Heart right ventricle (tissue), 16 donors: ENCODE measurements at regions of chrX and their contacts with region 1.

Region 1: DNA sequence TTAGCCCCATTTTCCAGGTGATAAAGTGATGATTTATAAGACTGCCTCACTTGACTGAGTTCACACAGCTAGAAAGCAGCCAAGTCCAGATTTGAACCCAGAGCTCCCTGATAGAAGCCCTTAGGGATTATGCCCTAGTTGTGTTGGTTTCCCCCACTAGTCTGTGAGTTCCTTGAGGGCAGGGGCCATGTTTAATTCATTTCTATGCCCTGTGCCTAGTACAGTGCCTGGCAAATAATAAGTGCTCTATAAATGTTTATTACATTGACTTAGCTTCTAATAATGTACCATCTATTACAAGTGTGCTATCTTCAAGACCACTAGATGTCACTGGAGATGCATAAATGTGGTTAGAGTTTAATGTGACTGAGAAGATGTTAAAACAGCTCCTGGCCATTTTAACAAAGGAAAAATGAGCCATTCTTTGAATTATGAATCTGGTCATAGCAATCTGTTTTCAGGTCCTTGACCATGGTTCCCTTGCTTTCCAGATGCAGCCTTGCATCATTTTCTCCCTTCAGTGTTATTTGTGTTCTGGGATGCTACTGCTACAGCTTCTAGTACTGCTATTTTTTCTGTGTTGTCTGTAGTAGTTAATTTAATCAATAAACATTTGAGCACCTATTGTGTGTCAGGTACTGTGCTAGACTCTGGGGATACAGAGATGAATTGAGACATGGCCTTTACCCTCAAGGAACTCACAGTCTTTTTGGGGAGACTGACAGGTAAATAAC is 43.2 kb downstream of the SLC9A6 start:
- DNase-seq: peak in 1 of 2 donors; percentile 11
- ATAC-seq: peak; percentile 30 to 61 (median 47)
- H3K4me3 ChIP-seq: no peak overlapping the region
- H3K27ac ChIP-seq: peak overlapping the region in 7 of 10 donors; percentile 12 to 91 (median 85)
- H3K4me1 ChIP-seq: peaks cover 0 to 43% (median 10%) of the 10 kb centered on the region in 9 donors
- H3K27me3 ChIP-seq: peaks cover 0 to 20% (median 0%) of the 10 kb centered on the region in 7 donors
- CTCF ChIP-seq: peak; percentile 28 to 71 (median 62)

Region 2: GRCh38 chrX:136106920-136107528 is 78.6 kb after region 1 on chrX:
- intact Hi-C with region 1: no loop called
- DNase-seq: no peak
- ATAC-seq: no peak
- H3K4me3 ChIP-seq: no peak overlapping the region
- H3K27ac ChIP-seq: no peak overlapping the region
- H3K4me1 ChIP-seq: no peaks in the 10 kb centered on the region
- H3K27me3 ChIP-seq: no peaks in the 10 kb centered on the region
- CTCF ChIP-seq: no peak

Region 3: DNA sequence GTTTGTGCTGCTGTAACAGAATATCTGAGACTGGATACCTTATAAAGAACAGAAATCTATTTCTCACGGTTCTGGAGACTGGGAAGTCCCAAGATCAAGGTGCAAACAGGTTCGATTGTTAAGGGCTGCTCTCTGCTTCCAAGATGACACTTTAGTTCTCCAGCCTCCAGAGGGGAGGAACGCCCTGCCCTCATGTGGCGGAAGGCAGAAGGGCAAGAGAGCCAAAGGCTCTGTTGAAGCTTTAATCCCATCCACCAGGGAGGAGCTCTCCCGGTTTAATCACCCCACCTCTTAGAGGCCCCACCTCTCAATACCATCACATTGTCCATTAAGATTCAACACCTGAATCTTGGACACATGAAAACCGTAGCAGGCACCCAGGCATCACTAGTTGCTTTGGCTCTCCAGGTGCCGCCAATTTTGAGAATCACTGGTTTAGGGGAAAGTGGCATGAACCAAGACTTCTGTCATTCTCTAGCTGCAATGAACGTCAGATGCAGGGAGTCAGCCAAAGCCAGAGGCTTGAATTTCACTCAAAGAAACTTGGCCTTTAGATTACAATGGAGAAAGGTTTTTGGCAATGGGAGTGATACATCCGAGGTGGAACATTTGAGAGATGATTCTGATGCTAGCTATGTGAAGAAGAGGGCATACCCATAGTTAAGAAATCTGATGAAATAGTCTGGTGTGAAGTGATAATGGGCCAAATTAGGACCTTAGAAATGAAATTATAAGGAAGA is 134.6 kb after region 1 on chrX:
- intact Hi-C with region 1: loop called in 9 of 10 experiments (anchors 1 to 5 kb)
- DNase-seq: peak; percentile 49 to 55
- ATAC-seq: peak; percentile 67 to 84 (median 75)
- H3K4me3 ChIP-seq: no peak overlapping the region
- H3K27ac ChIP-seq: peak overlapping the region in 7 of 10 donors; percentile 6 to 69 (median 52)
- H3K4me1 ChIP-seq: peaks cover 0 to 89% (median 6%) of the 10 kb centered on the region in 9 donors
- H3K27me3 ChIP-seq: peaks cover 0 to 23% (median 0%) of the 10 kb centered on the region in 7 donors
- CTCF ChIP-seq: peak; percentile 41 to 76 (median 67)

Region 4: GRCh38 chrX:136209016-136209738 is 180.8 kb after region 1 on chrX:
- intact Hi-C with region 1: loop called in 7 of 10 experiments (anchors 2 to 5 kb)
- DNase-seq: peak; percentile 52 to 55
- ATAC-seq: peak in 7 of 8 donors; percentile 14 to 49 (median 35)
- H3K4me3 ChIP-seq: no peak overlapping the region
- H3K27ac ChIP-seq: peak overlapping the region in 8 of 10 donors; percentile 50 to 72 (median 65)
- H3K4me1 ChIP-seq: peaks cover 5 to 55% (median 30%) of the 10 kb centered on the region in 9 donors
- H3K27me3 ChIP-seq: peaks cover 0 to 15% (median 0%) of the 10 kb centered on the region in 7 donors
- CTCF ChIP-seq: peak; percentile 24 to 67 (median 56)

Region 5: GRCh38 chrX:136268051-136269048 is 239.9 kb after region 1 on chrX:
- intact Hi-C with region 1: loop called in 8 of 10 experiments (anchors 2 to 5 kb)
- DNase-seq: peak in 1 of 2 donors; percentile 40
- ATAC-seq: peak in 6 of 8 donors; percentile 33 to 65 (median 53)
- H3K4me3 ChIP-seq: no peak overlapping the region
- H3K27ac ChIP-seq: no peak overlapping the region
- H3K4me1 ChIP-seq: no peaks in the 10 kb centered on the region
- H3K27me3 ChIP-seq: peaks cover 0 to 20% (median 0%) of the 10 kb centered on the region in 7 donors
- CTCF ChIP-seq: peak; percentile 47 to 86 (median 68)

Region 6: DNA sequence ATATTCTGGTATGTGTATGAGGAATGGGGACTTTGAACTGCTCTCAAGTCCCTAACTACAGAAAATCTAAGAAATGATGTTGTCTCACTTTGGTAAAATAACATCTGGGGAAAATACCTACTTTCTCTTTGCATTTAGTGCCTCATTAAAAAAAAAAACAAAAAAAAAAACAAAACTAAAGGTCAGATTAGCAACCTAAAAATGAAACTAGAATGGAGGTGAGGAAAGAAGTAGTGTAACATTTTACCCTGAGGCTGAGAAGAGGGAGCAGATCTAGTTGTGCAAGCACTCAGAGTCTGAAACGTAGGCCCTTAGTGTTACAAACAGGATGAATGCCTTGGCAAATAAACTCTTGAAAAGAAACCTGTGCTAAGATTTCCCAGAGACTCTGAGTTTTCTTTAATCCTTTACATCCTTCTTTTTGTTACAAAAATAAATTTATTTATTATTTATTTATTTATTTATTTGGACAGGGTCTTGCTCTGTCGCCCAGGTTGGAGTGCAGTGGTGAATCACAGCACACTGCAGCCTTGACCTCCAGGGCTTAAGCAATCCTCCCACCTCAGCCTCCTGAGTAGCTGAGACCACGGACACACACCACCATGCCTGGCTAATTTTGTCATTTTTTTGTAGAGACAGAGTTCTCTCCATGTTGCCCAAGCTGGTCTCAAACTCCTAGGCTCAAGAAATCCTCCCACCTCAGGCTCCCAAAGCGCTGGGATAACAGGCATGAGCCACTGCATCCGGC is 559.8 kb after region 1 on chrX:
- intact Hi-C with region 1: loop called in 1 of 10 experiments (anchors 10 kb)
- DNase-seq: no peak
- ATAC-seq: no peak
- H3K4me3 ChIP-seq: no peak overlapping the region
- H3K27ac ChIP-seq: peak overlapping the region in 1 of 10 donors; percentile 26
- H3K4me1 ChIP-seq: peaks cover 0 to 8% (median 0%) of the 10 kb centered on the region in 9 donors
- H3K27me3 ChIP-seq: peaks cover 0 to 13% (median 0%) of the 10 kb centered on the region in 7 donors
- CTCF ChIP-seq: no peak